Heart left ventricle (tissue), 16 donors: ENCODE measurements at regions of chr19 and their contacts with region 1.

Region 1: GRCh38 chr19:39765091-39766076 is 13.3 kb upstream of the LEUTX start:
- DNase-seq: peak in 3 of 5 donors; percentile 17 to 28 (median 21)
- ATAC-seq: no peak
- H3K4me3 ChIP-seq: no peak overlapping the region
- H3K27ac ChIP-seq: no peak overlapping the region
- H3K4me1 ChIP-seq: no peaks in the 10 kb centered on the region
- H3K27me3 ChIP-seq: peaks cover 0 to 10% (median 0%) of the 10 kb centered on the region in 9 donors
- CTCF ChIP-seq: peak; percentile 48 to 87 (median 66)
- POLR2A ChIP-seq: no peak

Region 2: DNA sequence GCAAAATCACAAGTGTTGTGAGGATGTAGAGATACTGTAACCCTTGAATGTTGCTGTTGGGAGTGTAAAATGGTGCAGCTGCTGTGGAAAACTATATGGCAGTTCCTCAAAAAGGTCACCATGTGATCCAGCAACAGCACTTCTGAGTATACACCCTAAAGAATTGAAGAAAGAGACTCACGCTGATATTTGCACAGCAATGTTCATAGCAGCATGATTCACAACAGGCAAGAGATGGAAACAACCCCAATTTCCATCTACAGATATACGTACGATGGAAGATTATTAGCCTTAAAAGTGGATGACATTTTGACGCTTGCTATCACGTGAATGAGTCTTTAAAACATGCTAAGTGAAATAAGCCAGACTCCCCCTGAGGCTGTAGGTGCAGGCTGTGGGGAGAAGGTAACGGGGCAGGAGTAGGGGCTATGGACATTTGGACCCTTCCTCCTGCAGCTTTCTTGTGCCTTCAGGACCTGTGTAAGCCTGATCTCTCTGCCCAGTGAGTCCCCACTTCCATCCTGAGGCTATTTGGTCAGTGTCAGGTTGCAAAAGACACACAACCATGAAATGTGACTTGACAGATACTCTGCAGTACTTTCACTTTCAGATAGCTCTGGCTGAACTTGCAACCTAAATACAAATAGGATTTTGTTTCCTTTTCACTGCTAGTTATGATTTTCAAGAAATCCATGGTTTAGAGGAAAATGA is 207.8 kb before region 1 on chr19:
- intact Hi-C with region 1: loop called in 4 of 10 experiments (anchors 5 to 10 kb)
- DNase-seq: no peak
- ATAC-seq: peak in 2 of 4 donors; percentile 31 to 44
- H3K4me3 ChIP-seq: peak overlapping the region in 2 of 12 donors; percentile 16 to 17
- H3K27ac ChIP-seq: peak overlapping the region in 1 of 12 donors; percentile 89
- H3K4me1 ChIP-seq: peaks cover 0 to 45% (median 0%) of the 10 kb centered on the region in 12 donors
- H3K27me3 ChIP-seq: peaks cover 0 to 3% (median 0%) of the 10 kb centered on the region in 9 donors
- CTCF ChIP-seq: no peak
- POLR2A ChIP-seq: no peak

Region 3: DNA sequence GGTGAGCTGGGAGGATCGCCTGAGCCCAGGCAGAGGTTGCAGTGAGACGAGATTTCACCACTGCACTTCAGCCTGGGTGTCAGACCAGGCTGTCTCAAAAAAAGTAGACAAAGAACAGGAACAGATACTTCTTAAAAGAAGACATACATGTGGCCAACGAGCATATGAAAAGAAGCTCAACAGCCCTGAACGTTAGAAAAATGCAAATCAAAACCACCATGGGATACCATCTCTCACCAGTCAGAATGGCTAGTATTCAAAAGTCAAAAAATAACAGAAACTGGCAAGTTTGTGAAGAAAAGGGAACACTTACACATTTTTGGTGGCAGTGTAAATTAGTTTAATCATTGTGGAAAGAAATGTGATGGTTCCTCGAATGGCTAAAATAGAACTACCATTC is 64.1 kb before region 1 on chr19:
- intact Hi-C with region 1: no loop called
- DNase-seq: no peak
- ATAC-seq: no peak
- H3K4me3 ChIP-seq: no peak overlapping the region
- H3K27ac ChIP-seq: no peak overlapping the region
- H3K4me1 ChIP-seq: no peaks in the 10 kb centered on the region
- H3K27me3 ChIP-seq: peaks cover 0 to 25% (median 5%) of the 10 kb centered on the region in 9 donors
- CTCF ChIP-seq: no peak
- POLR2A ChIP-seq: no peak

Region 4: GRCh38 chr19:39805104-39805503 is 39.7 kb after region 1 on chr19:
- intact Hi-C with region 1: no loop called
- DNase-seq: peak in 1 of 5 donors; percentile 54
- ATAC-seq: peak in 2 of 4 donors; percentile 13 to 46
- H3K4me3 ChIP-seq: no peak overlapping the region
- H3K27ac ChIP-seq: no peak overlapping the region
- H3K4me1 ChIP-seq: no peaks in the 10 kb centered on the region
- H3K27me3 ChIP-seq: peaks cover 0 to 12% (median 0%) of the 10 kb centered on the region in 9 donors
- CTCF ChIP-seq: no peak
- POLR2A ChIP-seq: no peak